ENCODE measurements at regions of chr5 and their contacts with region 1.

Region 1: GRCh38 chr5:98768160-98769005 is 5.1 kb upstream of the RGMB start:
- DNase-seq: peak; percentile 74
- ATAC-seq: peak; percentile 66
- H3K4me3 Mint-ChIP-seq: peak overlapping the region; percentile 94
- H3K27ac Mint-ChIP-seq: peak overlapping the region; percentile 96
- H3K4me1 Mint-ChIP-seq: peaks cover 52% of the 10 kb centered on the region
- H3K27me3 Mint-ChIP-seq: peaks cover 9% of the 10 kb centered on the region
- CTCF ChIP-seq: peak; percentile 79

Region 2: GRCh38 chr5:98624145-98624880 is 144.1 kb before region 1 on chr5:
- CTCF ChIA-PET with region 1: interaction called, 12 read pairs
- POLR2A ChIA-PET with region 1: no interaction called
- DNase-seq: no peak
- ATAC-seq: no peak
- H3K4me3 Mint-ChIP-seq: no peak overlapping the region
- H3K27ac Mint-ChIP-seq: no peak overlapping the region
- H3K4me1 Mint-ChIP-seq: no peaks in the 10 kb centered on the region
- H3K27me3 Mint-ChIP-seq: no peaks in the 10 kb centered on the region
- CTCF ChIP-seq: no peak

Region 3: GRCh38 chr5:98635637-98636036 is 132.7 kb before region 1 on chr5:
- CTCF ChIA-PET with region 1: interaction called, 13 read pairs
- POLR2A ChIA-PET with region 1: no interaction called
- DNase-seq: no peak
- ATAC-seq: no peak; the same call in none of the 2 replicates
- H3K4me3 Mint-ChIP-seq: no peak overlapping the region
- H3K27ac Mint-ChIP-seq: peak overlapping the region; percentile 54
- H3K4me1 Mint-ChIP-seq: peaks cover 34% of the 10 kb centered on the region
- H3K27me3 Mint-ChIP-seq: no peaks in the 10 kb centered on the region
- CTCF ChIP-seq: no peak

Region 4: DNA sequence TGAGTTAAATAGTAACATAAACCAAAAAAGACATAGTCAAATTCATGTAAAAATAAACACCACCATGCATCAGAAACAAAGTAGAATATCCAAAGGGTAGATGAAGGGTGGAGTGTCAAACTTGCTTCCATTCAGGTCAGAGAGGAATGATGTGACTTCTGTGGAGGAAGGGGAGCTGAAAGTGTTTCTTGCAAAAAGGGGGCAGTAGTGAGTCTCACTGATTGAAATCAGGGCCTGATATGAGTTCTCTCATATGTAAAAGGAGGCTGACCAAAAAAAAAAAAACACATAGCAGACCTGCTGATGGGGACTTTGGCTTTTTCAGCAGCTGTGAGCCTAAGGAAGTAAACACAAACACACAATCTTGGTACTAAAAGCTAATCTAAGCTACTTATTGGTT is 33.7 kb before region 1 on chr5:
- CTCF ChIA-PET with region 1: interaction called, 15 read pairs
- POLR2A ChIA-PET with region 1: no interaction called
- DNase-seq: no peak
- ATAC-seq: peak; percentile 51; the same call in 1 of the 2 replicates
- H3K4me3 Mint-ChIP-seq: no peak overlapping the region
- H3K27ac Mint-ChIP-seq: no peak overlapping the region
- H3K4me1 Mint-ChIP-seq: peaks cover 6% of the 10 kb centered on the region
- H3K27me3 Mint-ChIP-seq: no peaks in the 10 kb centered on the region
- CTCF ChIP-seq: no peak

Region 5: GRCh38 chr5:98750693-98751092 is 17.7 kb before region 1 on chr5:
- CTCF ChIA-PET with region 1: interaction called, 37 read pairs
- POLR2A ChIA-PET with region 1: interaction called, 3 read pairs
- DNase-seq: peak; percentile 52
- ATAC-seq: peak; percentile 86
- H3K4me3 Mint-ChIP-seq: peak overlapping the region; percentile 44
- H3K27ac Mint-ChIP-seq: peak overlapping the region; percentile 77; the same call in 1 of the 2 replicates
- H3K4me1 Mint-ChIP-seq: peaks cover 46% of the 10 kb centered on the region
- H3K27me3 Mint-ChIP-seq: no peaks in the 10 kb centered on the region; the same call in 1 of the 2 replicates
- CTCF ChIP-seq: peak; percentile 47; the same call in 1 of the 2 replicates

Region 6: GRCh38 chr5:98791001-98791519 is 22.7 kb after region 1 on chr5:
- CTCF ChIA-PET with region 1: interaction called, 57 read pairs
- POLR2A ChIA-PET with region 1: interaction called, 5 read pairs
- DNase-seq: no peak
- ATAC-seq: no peak
- H3K4me3 Mint-ChIP-seq: no peak overlapping the region; the same call in 1 of the 2 replicates
- H3K27ac Mint-ChIP-seq: peak overlapping the region; percentile 82
- H3K4me1 Mint-ChIP-seq: peaks cover 75% of the 10 kb centered on the region
- H3K27me3 Mint-ChIP-seq: no peaks in the 10 kb centered on the region
- CTCF ChIP-seq: no peak

Region 7: DNA sequence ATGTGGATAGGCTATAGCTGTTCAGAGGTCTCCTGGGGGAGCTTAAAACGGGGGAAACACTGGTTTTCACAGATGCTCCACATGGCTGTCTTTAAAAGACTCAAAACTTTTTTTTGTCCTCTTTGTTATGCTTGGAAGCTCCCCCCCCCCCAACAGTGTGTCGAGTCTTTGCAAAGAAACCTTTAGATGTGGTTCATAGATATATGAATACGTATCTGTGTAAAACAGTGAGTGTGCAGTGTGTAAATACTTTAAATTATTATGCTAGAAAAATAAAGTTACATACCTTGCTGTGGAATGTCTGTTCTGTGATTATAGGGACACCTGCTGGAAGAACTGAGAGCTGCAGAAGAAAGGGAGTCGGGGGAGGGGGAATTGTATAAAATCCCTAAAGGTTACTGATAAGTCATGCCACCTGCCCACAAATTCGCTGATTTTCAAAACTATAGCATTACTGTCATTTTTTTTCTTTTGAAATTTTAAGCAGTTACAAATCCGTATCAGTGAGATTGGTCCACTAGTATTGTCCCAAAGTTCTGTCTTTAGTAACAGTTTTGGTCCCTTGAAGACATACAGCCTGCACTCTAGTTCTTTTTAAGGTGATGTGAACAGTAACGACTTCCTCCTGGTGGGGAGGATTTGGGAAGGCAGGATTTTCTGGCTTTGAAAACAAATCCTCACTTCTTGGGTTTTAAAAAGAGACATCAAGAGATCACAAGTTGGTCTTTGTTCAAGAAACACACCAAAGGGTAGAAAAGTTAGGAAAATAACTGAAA is 28.0 kb after region 1 on chr5:
- CTCF ChIA-PET with region 1: interaction called, 57 read pairs
- POLR2A ChIA-PET with region 1: interaction called, 5 read pairs
- DNase-seq: peak; percentile 56
- ATAC-seq: peak; percentile 77
- H3K4me3 Mint-ChIP-seq: no peak overlapping the region
- H3K27ac Mint-ChIP-seq: peak overlapping the region; percentile 86
- H3K4me1 Mint-ChIP-seq: peaks cover 35% of the 10 kb centered on the region
- H3K27me3 Mint-ChIP-seq: no peaks in the 10 kb centered on the region
- CTCF ChIP-seq: peak; percentile 45

Region 8: DNA sequence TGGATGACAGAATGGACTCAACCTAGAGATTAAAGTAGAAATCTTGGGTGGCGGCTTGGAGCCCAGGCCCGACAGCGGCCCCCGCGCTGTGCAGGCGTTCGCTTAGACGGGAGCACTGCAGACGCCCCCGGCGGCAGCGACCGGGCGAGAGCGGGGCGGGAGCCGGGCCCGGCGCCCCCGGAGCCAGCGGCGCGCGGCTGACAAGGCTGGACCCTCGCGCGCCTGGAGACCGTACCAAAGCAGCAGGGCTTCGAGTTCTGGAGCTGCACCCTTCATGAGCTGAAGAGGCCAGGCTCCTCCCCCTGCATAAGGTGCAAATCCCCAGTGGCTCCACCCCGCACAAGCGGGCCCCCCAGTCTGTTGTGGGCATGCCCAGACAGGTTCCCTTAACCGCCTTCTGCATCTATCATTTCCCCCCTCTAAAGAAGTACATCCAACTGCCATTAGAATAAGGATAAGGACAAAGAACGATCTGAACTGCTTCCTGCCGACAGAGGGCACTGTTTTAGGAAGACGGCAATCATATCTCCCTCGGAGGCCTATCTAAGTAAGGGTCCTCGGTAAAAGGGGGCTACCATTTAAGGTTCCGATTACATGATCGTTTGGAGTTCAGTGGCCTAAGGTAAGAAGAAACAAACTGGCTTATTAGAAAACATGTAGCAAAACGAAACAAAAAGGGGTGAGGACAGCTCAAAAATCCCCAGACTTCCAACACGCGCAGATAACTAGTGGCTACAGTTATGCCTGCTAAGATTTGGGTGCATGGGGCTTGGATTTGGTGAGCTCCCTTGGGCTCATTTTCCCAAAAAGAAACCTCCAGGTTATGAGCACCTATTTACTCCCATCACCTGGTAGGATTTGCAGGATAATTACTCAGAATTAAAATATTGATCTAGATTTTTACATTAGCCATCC is 71.3 kb after region 1 on chr5:
- CTCF ChIA-PET with region 1: no interaction called
- POLR2A ChIA-PET with region 1: no interaction called
- DNase-seq: peak; percentile 23
- ATAC-seq: peak; percentile 90
- H3K4me3 Mint-ChIP-seq: no peak overlapping the region
- H3K27ac Mint-ChIP-seq: peak overlapping the region; percentile 41; the same call in 1 of the 2 replicates
- H3K4me1 Mint-ChIP-seq: peaks cover 3% of the 10 kb centered on the region
- H3K27me3 Mint-ChIP-seq: no peaks in the 10 kb centered on the region
- CTCF ChIP-seq: 0 out of 2 replicates have a peak, but pooled peaks have one; percentile 25

Region 9: DNA sequence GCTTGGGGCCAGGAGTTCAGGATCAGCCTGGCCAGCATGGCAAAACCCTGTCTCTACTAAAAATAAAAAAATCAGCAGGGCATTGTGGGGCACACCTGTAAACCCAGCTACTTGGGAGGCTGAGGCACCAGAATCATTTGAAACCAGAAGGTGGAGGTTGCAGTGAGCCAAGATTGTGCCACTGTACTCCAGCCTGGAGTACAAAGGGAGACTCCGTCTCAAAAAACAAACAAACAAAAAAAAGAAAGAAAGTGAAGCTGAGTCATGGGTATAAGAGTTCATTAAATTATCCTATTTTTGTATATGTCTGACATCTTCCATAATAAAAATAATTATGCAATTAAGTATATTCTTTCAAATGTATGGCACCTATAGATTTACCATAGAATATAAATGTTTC is 123.2 kb after region 1 on chr5:
- CTCF ChIA-PET with region 1: no interaction called
- POLR2A ChIA-PET with region 1: no interaction called
- DNase-seq: no peak
- ATAC-seq: no peak
- H3K4me3 Mint-ChIP-seq: no peak overlapping the region
- H3K27ac Mint-ChIP-seq: no peak overlapping the region
- H3K4me1 Mint-ChIP-seq: no peaks in the 10 kb centered on the region
- H3K27me3 Mint-ChIP-seq: no peaks in the 10 kb centered on the region
- CTCF ChIP-seq: no peak